Endothelial cell of umbilical vein (primary cell): ENCODE measurements at regions of chr7 and their contacts with region 1.

Region 1: DNA sequence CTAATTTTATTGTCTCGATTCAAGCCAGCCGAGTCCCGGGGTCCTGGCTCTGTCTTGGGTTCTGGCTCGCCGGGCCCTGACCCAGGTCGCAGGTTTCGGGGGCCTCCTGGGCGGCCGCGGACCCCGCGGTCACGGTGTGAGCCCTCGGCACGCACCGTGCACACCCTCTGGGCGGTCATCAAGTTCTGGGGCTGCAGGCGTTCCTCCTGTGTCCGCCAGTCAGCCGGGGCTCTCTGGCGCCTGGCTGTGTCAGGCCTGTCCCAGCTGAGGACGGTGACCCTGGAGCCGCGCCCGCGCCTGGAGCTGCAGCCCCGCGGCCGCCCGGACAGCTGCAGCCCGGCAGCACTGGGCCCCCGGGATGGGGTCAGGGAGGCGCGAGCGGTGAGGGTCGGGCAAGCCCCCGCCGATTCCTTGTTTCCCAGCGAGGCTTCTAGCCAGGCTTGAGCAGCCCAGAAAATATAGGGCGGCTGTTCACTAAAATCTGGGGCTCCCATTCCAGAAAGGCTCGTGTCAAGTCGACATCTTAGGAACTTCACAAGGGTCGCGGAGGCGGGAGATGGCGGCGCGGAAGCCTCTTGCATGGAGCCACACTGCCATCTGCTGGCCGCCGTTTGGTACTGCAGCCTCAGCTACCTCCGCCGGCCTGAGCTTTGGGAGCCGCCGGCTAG is 4.2 kb upstream of the HOXA7 start:
- DNase-seq: peak; percentile 92
- H3K4me3 ChIP-seq: peak overlapping the region in 2 of 3 experiments; percentile 44 to 63
- H3K27ac ChIP-seq: peak overlapping the region; percentile 69
- H3K4me1 ChIP-seq: peaks cover 42% of the 10 kb centered on the region
- H3K27me3 ChIP-seq: no peaks in the 10 kb centered on the region
- CTCF ChIP-seq: peak; percentile 95
- POLR2A ChIP-seq: no peak

Region 2: GRCh38 chr7:25389489-25390106 is 1771.1 kb before region 1 on chr7:
- CTCF ChIA-PET with region 1: no interaction called
- POLR2A ChIA-PET with region 1: no interaction called
- dilution Hi-C with region 1: no loop called
- intact Hi-C with region 1: loop called (anchors 5 kb)
- DNase-seq: peak; percentile 44
- H3K4me3 ChIP-seq: no peak overlapping the region
- H3K27ac ChIP-seq: no peak overlapping the region
- H3K4me1 ChIP-seq: no peaks in the 10 kb centered on the region
- H3K27me3 ChIP-seq: peaks cover 2 to 3% of the 10 kb centered on the region in 2 experiments
- CTCF ChIP-seq: peak; percentile 23 to 40
- POLR2A ChIP-seq: no peak

Region 3: GRCh38 chr7:26090927-26091519 is 1069.7 kb before region 1 on chr7:
- CTCF ChIA-PET with region 1: interaction called, 3 read pairs
- POLR2A ChIA-PET with region 1: no interaction called
- dilution Hi-C with region 1: no loop called
- intact Hi-C with region 1: loop called (anchors 1 kb)
- DNase-seq: peak; percentile 74
- H3K4me3 ChIP-seq: no peak overlapping the region
- H3K27ac ChIP-seq: no peak overlapping the region
- H3K4me1 ChIP-seq: no peaks in the 10 kb centered on the region
- H3K27me3 ChIP-seq: peaks cover 0 to 3% of the 10 kb centered on the region in 2 experiments
- CTCF ChIP-seq: peak; percentile 54 to 62
- POLR2A ChIP-seq: no peak

Region 4: GRCh38 chr7:26284995-26285632 is 875.6 kb before region 1 on chr7:
- CTCF ChIA-PET with region 1: no interaction called
- POLR2A ChIA-PET with region 1: no interaction called
- dilution Hi-C with region 1: no loop called
- intact Hi-C with region 1: loop called (anchors 5 kb)
- DNase-seq: no peak
- H3K4me3 ChIP-seq: no peak overlapping the region
- H3K27ac ChIP-seq: no peak overlapping the region
- H3K4me1 ChIP-seq: no peaks in the 10 kb centered on the region
- H3K27me3 ChIP-seq: peaks cover 2 to 3% of the 10 kb centered on the region in 2 experiments
- CTCF ChIP-seq: no peak
- POLR2A ChIP-seq: no peak

Region 5: DNA sequence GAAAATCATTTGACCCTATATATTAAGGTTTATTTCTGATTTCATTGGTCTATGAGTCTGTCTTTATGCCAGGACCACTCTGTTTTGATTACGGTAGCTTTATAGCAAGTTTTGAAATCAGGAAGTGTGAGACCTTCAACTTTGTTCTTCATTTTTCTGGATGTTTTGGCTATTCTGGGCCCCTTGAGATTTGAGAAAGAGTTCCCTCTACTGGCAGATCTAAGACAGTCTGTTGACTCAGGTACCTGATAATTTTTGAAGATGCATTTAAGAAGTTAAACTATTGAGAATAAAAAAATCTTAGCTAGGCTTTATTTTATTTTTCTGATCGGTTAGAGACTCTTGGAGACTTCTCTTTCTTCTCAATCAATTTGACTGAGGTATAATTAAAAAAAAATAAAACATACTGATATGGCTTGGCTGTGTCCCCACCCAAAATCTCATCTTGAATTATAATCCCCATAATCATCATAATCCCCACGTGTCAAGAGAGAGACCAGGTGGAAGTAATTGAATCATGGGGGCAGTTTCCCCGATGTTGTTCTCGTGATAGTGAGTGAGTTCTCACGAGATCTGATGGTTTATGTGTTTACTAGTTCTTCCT is 659.8 kb before region 1 on chr7:
- CTCF ChIA-PET with region 1: no interaction called
- POLR2A ChIA-PET with region 1: no interaction called
- dilution Hi-C with region 1: no loop called
- intact Hi-C with region 1: loop called (anchors 1 kb)
- DNase-seq: peak; percentile 52
- H3K4me3 ChIP-seq: no peak overlapping the region
- H3K27ac ChIP-seq: no peak overlapping the region
- H3K4me1 ChIP-seq: no peaks in the 10 kb centered on the region
- H3K27me3 ChIP-seq: peaks cover 2 to 3% of the 10 kb centered on the region in 2 experiments
- CTCF ChIP-seq: peak; percentile 25 to 29
- POLR2A ChIP-seq: no peak

Region 6: GRCh38 chr7:26686448-26686981 is 474.2 kb before region 1 on chr7:
- CTCF ChIA-PET with region 1: interaction called, 49 read pairs
- POLR2A ChIA-PET with region 1: no interaction called
- dilution Hi-C with region 1: no loop called
- intact Hi-C with region 1: loop called (anchors 1 kb)
- DNase-seq: peak; percentile 90
- H3K4me3 ChIP-seq: no peak overlapping the region
- H3K27ac ChIP-seq: peak overlapping the region; percentile 78
- H3K4me1 ChIP-seq: peaks cover 91% of the 10 kb centered on the region
- H3K27me3 ChIP-seq: no peaks in the 10 kb centered on the region
- CTCF ChIP-seq: peak; percentile 23 to 35
- POLR2A ChIP-seq: no peak

Region 7: DNA sequence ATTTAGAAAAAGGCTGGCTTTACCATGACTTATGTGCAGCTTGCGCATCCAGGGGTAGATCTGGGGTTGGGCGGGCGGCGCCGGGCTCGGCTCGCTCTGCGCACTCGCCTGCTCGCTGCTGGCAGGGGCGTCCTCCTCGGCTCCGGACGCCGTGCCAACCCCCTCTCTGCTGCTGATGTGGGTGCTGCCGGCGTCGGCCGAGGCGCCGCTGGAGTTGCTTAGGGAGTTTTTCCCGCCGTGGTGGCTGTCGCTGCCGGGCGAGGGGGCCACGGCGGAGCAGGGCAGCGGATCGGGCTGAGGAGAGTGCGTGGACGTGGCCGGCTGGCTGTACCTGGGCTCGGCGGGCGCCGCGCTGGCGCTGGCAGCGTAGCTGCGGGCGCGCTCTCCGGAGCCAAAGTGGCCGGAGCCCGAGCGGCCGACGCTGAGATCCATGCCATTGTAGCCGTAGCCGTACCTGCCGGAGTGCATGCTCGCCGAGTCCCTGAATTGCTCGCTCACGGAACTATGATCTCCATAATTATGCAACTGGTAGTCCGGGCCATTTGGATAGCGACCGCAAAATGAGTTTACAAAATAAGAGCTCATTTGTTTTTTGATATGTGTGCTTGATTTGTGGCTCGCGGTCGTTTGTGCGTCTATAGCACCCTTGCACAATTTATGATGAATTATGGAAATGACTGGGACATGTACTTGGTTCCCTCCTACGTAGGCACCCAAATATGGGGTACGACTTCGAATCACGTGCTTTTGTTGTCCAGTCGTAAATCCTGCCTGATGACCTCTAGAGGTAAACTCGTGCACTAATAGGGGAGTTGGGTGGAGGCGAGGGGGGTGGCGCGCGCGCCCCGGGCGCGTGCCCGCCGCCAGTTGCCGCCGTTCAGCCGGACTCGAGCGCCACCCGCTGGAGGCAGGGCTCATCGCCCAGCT is 17.4 kb before region 1 on chr7 and contains the start of gene HOXA5:
- CTCF ChIA-PET with region 1: interaction called, 83 read pairs
- POLR2A ChIA-PET with region 1: interaction called, 8 read pairs
- dilution Hi-C with region 1: no loop called
- intact Hi-C with region 1: loop called (anchors 1 kb)
- DNase-seq: peak; percentile 97
- H3K4me3 ChIP-seq: peak within 1 kb of the TSS; percentile 29 to 84 (median 65)
- H3K27ac ChIP-seq: peak within 1 kb of the TSS; percentile 82
- H3K4me1 ChIP-seq: peaks cover 73% of the 10 kb centered on the region
- H3K27me3 ChIP-seq: no peaks in the 10 kb centered on the region
- CTCF ChIP-seq: peak; percentile 83 to 96
- POLR2A ChIP-seq: peak; percentile 86
- total RNA-seq, gene HOXA5: 18.8 and 21.4 TPM in 2 replicates

Region 8: DNA sequence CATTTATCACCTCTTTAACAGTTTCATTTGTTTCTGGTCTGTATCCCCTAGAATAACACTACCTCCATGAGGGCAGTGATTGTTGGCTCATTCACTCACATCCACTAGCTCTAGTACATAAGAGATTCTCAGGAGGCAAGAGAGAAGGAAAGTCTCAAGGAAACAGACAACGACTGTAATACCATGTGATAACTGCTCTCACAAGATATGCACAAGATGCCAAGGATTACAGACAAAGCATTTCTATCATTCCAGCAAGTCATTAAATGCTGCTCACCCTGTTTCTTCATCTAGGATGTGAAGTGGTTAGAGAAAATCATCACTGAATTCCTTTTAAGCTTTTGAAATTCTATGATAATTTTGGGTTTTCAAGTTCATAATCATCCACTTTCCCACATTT is 386.7 kb after region 1 on chr7:
- CTCF ChIA-PET with region 1: no interaction called
- POLR2A ChIA-PET with region 1: no interaction called
- dilution Hi-C with region 1: no loop called
- intact Hi-C with region 1: no loop called
- DNase-seq: no peak
- H3K4me3 ChIP-seq: no peak overlapping the region
- H3K27ac ChIP-seq: no peak overlapping the region
- H3K4me1 ChIP-seq: no peaks in the 10 kb centered on the region
- H3K27me3 ChIP-seq: no peaks in the 10 kb centered on the region
- CTCF ChIP-seq: no peak
- POLR2A ChIP-seq: no peak